ENCODE measurements at regions of chr2 and their contacts with region 1.

Region 1: DNA sequence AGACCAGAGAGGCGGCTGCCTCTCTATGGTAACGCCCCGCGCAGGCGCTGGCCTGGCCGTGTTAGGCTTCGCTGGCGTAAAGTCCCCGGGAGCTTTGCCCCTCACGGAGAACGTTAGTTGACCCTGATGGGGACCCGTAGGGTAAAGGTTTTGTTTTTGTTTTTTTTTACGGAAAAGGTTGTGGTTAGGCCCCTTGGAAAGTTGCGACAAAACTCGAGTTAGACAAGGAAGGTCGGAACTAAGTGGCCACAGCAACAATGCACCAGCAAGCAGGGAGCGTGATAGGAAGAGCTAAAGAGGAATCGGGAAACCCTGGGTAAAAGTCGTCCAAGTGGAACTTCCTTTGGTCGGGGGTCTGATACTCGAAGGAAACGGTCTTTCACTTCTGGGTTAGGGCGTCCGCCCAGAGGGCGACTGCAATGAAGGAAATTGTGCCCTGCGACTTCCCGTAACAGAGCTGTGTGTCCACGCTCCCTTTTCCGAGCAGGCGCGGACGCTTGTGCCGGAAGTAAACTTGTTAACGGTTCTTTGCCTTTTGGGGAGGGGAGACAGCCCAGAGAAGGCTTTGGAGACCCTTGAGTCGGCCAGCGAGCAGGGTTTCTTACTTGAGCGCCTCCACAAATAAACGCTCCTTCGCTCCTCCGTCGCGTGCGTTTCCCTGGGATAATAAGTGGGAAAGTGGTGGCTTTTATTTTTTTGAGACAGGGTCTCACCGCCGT is 493 bp upstream of the CLASP1 start:
- DNase-seq: peak; percentile 90 to 99 (median 95)
- ATAC-seq: peak; percentile 92
- H3K4me3 ChIP-seq: peak overlapping the region; percentile 77
- H3K4me3 Mint-ChIP-seq: peak overlapping the region; percentile 98
- H3K27ac ChIP-seq: peak overlapping the region; percentile 94
- H3K27ac Mint-ChIP-seq: peak overlapping the region; percentile 99
- H3K4me1 ChIP-seq: peaks cover 25% of the 10 kb centered on the region
- H3K4me1 Mint-ChIP-seq: peaks cover 78% of the 10 kb centered on the region
- H3K27me3 ChIP-seq: no peaks in the 10 kb centered on the region
- H3K27me3 Mint-ChIP-seq: peaks cover 4% of the 10 kb centered on the region
- CTCF ChIP-seq: no peak

Region 2: GRCh38 chr2:121596221-121597080 is 53.3 kb before region 1 on chr2:
- CTCF ChIA-PET with region 1: no interaction called
- POLR2A ChIA-PET with region 1: interaction called, 6 read pairs
- intact Hi-C with region 1: loop called (anchors 5 kb)
- DNase-seq: peak in 3 of 14 experiments; percentile 24 to 54 (median 53)
- ATAC-seq: peak; percentile 73
- H3K4me3 ChIP-seq: peak overlapping the region; percentile 29
- H3K4me3 Mint-ChIP-seq: peak overlapping the region; percentile 61
- H3K27ac ChIP-seq: peak overlapping the region in 1 of 2 donors; percentile 7
- H3K27ac Mint-ChIP-seq: peak overlapping the region; percentile 52
- H3K4me1 ChIP-seq: peaks cover 12% of the 10 kb centered on the region
- H3K4me1 Mint-ChIP-seq: peaks cover 64% of the 10 kb centered on the region
- H3K27me3 ChIP-seq: no peaks in the 10 kb centered on the region
- H3K27me3 Mint-ChIP-seq: no peaks in the 10 kb centered on the region
- CTCF ChIP-seq: peak; percentile 25

Region 3: GRCh38 chr2:121670181-121670580 is 20.4 kb after region 1 on chr2:
- CTCF ChIA-PET with region 1: no interaction called
- POLR2A ChIA-PET with region 1: interaction called, 11 read pairs
- intact Hi-C with region 1: no loop called
- DNase-seq: no peak
- ATAC-seq: no peak
- H3K4me3 ChIP-seq: no peak overlapping the region
- H3K4me3 Mint-ChIP-seq: no peak overlapping the region
- H3K27ac ChIP-seq: no peak overlapping the region
- H3K27ac Mint-ChIP-seq: no peak overlapping the region
- H3K4me1 ChIP-seq: no peaks in the 10 kb centered on the region
- H3K4me1 Mint-ChIP-seq: no peaks in the 10 kb centered on the region
- H3K27me3 ChIP-seq: no peaks in the 10 kb centered on the region
- H3K27me3 Mint-ChIP-seq: no peaks in the 10 kb centered on the region
- CTCF ChIP-seq: no peak

Region 4: DNA sequence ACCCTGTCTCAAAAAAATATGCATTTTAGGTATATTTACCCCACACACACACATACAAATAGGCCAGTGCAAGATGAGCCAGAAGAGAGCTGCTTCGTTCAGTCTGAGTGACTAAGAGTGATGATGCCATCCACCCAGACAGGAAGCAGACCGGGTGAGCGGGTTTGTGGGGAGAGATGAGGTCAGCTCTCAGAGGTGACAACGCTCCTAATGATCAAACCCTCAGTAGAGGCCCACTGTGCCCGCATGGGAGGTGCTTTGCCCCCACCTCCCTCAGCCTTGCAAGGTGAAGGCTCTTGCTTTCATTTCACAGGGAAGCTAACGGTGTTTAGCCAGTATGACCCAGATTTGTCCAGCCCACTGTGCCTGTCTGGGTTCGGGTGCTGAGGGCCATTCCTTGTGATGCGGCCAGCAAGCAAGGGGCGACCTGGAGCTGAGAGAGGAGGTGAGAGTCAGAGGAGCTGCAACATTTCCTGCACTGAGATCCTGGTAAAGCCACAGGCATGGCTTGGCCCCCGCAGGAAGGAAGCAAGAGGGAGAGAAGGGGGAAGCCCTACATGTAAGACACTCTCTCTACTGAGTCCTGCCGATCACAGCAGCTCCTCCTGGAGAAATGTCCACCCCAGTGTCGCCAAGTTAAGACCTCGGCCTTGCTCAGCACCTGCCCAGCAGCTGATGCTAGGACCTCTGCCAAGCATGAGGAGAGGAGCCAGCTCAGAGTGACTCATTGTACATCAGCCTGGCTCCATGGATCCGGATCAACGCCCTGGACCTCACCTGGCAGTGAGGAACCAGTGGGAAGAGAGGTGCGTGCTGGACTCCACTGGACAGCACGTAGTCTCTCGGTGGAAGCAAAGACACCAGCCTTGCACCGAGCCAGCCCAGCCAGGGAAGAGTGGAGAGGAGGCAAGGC is 49.9 kb after region 1 on chr2:
- CTCF ChIA-PET with region 1: interaction called, 11 read pairs
- POLR2A ChIA-PET with region 1: interaction called, 48 read pairs
- intact Hi-C with region 1: loop called (anchors 1 to 5 kb)
- DNase-seq: peak; percentile 63 to 94 (median 75)
- ATAC-seq: peak; percentile 94
- H3K4me3 ChIP-seq: peak overlapping the region; percentile 39
- H3K4me3 Mint-ChIP-seq: peak overlapping the region; percentile 75
- H3K27ac ChIP-seq: peak overlapping the region; percentile 58 to 74
- H3K27ac Mint-ChIP-seq: peak overlapping the region; percentile 88
- H3K4me1 ChIP-seq: peaks cover 28% of the 10 kb centered on the region
- H3K4me1 Mint-ChIP-seq: peaks cover 38% of the 10 kb centered on the region
- H3K27me3 ChIP-seq: no peaks in the 10 kb centered on the region
- H3K27me3 Mint-ChIP-seq: no peaks in the 10 kb centered on the region
- CTCF ChIP-seq: no peak

Region 5: GRCh38 chr2:121722479-121722878 is 72.7 kb after region 1 on chr2:
- CTCF ChIA-PET with region 1: interaction called, 10 read pairs
- POLR2A ChIA-PET with region 1: interaction called, 5 read pairs
- intact Hi-C with region 1: loop called (anchors 1 to 5 kb)
- DNase-seq: peak in 1 of 14 experiments; percentile 44
- ATAC-seq: no peak
- H3K4me3 ChIP-seq: no peak overlapping the region
- H3K4me3 Mint-ChIP-seq: no peak overlapping the region
- H3K27ac ChIP-seq: no peak overlapping the region
- H3K27ac Mint-ChIP-seq: no peak overlapping the region
- H3K4me1 ChIP-seq: peaks cover 8% of the 10 kb centered on the region
- H3K4me1 Mint-ChIP-seq: peaks cover 6% of the 10 kb centered on the region
- H3K27me3 ChIP-seq: no peaks in the 10 kb centered on the region
- H3K27me3 Mint-ChIP-seq: no peaks in the 10 kb centered on the region
- CTCF ChIP-seq: no peak

Region 6: GRCh38 chr2:121736462-121737341 is 86.9 kb after region 1 on chr2 and contains the start of gene NIFK:
- CTCF ChIA-PET with region 1: interaction called, 3 read pairs
- POLR2A ChIA-PET with region 1: interaction called, 68 read pairs
- intact Hi-C with region 1: loop called (anchors 1 to 2 kb)
- DNase-seq: peak; percentile 99 to 100 (median 100)
- ATAC-seq: peak; percentile 86
- H3K4me3 ChIP-seq: peak within 1 kb of the TSS; percentile 67
- H3K4me3 Mint-ChIP-seq: peak within 1 kb of the TSS; percentile 97
- H3K27ac ChIP-seq: peak within 1 kb of the TSS; percentile 78 to 89
- H3K27ac Mint-ChIP-seq: peak within 1 kb of the TSS; percentile 99
- H3K4me1 ChIP-seq: peaks cover 28% of the 10 kb centered on the region
- H3K4me1 Mint-ChIP-seq: peaks cover 47% of the 10 kb centered on the region
- H3K27me3 ChIP-seq: no peaks in the 10 kb centered on the region
- H3K27me3 Mint-ChIP-seq: no peaks in the 10 kb centered on the region
- CTCF ChIP-seq: no peak
- total RNA-seq, gene NIFK: 43.6 to 47.7 TPM

Region 7: DNA sequence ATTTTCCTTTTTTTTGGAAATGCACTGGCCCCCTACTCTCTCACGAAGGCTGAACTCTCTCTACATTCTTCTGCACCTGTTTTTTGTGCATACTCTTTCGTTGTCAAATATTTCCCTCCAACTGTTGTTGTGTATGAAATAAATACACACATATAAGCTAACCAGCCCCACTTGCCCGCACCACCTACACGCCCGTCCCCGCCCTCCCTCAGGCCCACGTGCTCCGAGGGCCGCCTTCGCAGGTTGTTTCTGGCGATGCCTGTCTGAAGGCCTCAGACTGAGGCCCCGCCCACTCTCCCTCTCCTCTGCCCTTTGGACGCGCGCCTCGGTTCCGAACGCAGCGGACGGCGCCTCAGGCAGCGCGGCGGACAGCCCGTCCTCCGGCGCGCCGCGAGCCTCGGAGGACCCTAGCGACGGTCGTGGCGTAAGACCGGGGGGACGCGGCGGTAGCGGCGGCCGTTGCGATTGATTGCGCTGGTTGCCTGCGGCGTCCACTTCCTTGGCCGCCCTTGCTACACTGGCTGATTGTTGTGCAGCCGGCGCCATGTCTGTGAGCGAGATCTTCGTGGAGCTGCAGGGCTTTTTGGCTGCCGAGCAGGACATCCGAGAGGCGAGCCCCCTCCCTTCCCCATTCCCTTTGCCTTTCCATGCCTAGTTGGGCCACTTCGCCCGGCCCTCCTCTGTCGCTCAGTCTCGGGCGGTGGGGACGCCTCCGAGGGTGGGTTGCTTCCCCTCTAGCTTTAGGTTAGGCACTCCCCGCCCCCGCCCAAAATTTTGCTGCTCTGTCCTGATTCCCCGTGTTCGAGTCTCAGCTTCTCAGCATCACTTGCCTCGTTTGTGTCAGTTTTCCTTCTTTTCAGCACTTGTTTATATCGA is 105.7 kb after region 1 on chr2 and contains the start of gene TSN:
- CTCF ChIA-PET with region 1: no interaction called
- POLR2A ChIA-PET with region 1: interaction called, 20 read pairs
- intact Hi-C with region 1: loop called in 1 of 2 experiments (anchors 5 kb)
- DNase-seq: peak; percentile 94 to 99 (median 97)
- ATAC-seq: peak; percentile 99
- H3K4me3 ChIP-seq: peak within 1 kb of the TSS; percentile 94
- H3K4me3 Mint-ChIP-seq: peak within 1 kb of the TSS; percentile 91
- H3K27ac ChIP-seq: peak within 1 kb of the TSS; percentile 66 to 72
- H3K27ac Mint-ChIP-seq: peak within 1 kb of the TSS; percentile 91
- H3K4me1 ChIP-seq: peaks cover 13% of the 10 kb centered on the region
- H3K4me1 Mint-ChIP-seq: peaks cover 33% of the 10 kb centered on the region
- H3K27me3 ChIP-seq: no peaks in the 10 kb centered on the region
- H3K27me3 Mint-ChIP-seq: no peaks in the 10 kb centered on the region
- CTCF ChIP-seq: no peak
- total RNA-seq, gene TSN: 49.1 to 50.9 TPM